MCF 10A (cell line): ENCODE measurements at regions of chr7 and their contacts with region 1.

Region 1: GRCh38 chr7:77837290-77837689 is 38.7 kb downstream of the PHTF2 start:
- DNase-seq: no peak
- H3K4me3 Mint-ChIP-seq: no peak overlapping the region
- H3K27ac Mint-ChIP-seq: no peak overlapping the region
- H3K4me1 Mint-ChIP-seq: peaks cover 18% of the 10 kb centered on the region
- H3K27me3 Mint-ChIP-seq: no peaks in the 10 kb centered on the region
- CTCF ChIP-seq: no peak

Region 2: DNA sequence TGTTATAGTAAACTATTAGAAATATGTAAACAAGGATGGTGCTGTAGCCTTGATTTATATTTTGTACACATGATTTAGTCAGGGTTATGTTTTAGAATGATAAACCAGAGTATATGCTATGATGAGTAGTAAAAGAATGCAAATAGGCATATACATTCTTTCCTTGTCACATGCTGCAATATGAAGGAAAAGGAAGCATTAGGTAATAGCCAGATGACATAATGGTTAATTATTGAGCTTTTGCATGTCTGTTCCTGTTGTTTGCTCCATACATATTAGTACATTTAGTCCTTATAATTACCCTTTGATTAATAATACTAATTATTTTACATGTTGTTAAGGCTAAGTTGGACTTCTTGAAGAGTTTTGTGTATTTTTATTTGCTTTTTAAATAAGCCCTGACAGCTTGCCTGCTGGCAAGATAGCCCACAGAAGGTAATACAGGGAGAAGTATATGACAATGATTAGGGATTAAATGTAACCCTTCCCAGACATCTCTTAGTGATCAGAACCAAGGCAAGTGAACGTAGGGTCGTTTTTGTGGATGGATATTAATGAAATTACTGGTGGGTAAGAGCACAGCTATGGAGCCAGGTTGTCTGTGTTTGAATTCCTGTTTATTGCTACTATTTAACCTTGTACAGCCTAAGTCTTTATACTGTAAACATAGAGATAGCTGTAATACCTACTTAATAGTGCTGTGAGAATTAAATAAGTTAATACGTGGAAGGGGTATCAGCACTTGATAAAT is 29.7 kb after region 1 on chr7:
- CTCF ChIA-PET with region 1: interaction called, 3 read pairs
- POLR2A ChIA-PET with region 1: interaction called, 10 read pairs
- intact Hi-C with region 1: no loop called
- DNase-seq: peak; percentile 40
- H3K4me3 Mint-ChIP-seq: no peak overlapping the region
- H3K27ac Mint-ChIP-seq: no peak overlapping the region
- H3K4me1 Mint-ChIP-seq: peaks cover 11% of the 10 kb centered on the region
- H3K27me3 Mint-ChIP-seq: no peaks in the 10 kb centered on the region
- CTCF ChIP-seq: no peak

Region 3: DNA sequence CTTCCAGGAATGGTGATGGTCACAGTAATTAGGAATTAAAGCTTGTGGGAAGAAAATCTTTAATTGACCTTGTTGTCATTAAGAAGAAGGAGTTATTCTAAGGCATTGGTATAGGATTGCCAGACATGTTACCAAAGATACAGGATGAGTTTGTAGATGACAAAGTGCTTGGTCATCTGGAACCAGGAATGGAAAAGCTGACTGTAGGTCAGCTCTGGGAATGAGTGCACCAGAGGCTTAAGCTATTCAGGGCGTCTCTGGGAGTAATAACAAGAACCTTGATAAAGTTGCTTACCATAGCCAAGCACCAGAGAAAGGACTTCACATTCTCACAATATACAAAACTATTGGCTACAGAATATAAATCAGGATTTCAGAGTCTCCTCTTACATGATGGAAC is 50.3 kb after region 1 on chr7:
- CTCF ChIA-PET with region 1: no interaction called
- POLR2A ChIA-PET with region 1: no interaction called
- intact Hi-C with region 1: no loop called
- DNase-seq: no peak
- H3K4me3 Mint-ChIP-seq: no peak overlapping the region
- H3K27ac Mint-ChIP-seq: no peak overlapping the region
- H3K4me1 Mint-ChIP-seq: peaks cover 6% of the 10 kb centered on the region
- H3K27me3 Mint-ChIP-seq: no peaks in the 10 kb centered on the region
- CTCF ChIP-seq: no peak